PC-3 (cell line): ENCODE measurements at regions of chr9 and their contacts with region 1.

Region 1: DNA sequence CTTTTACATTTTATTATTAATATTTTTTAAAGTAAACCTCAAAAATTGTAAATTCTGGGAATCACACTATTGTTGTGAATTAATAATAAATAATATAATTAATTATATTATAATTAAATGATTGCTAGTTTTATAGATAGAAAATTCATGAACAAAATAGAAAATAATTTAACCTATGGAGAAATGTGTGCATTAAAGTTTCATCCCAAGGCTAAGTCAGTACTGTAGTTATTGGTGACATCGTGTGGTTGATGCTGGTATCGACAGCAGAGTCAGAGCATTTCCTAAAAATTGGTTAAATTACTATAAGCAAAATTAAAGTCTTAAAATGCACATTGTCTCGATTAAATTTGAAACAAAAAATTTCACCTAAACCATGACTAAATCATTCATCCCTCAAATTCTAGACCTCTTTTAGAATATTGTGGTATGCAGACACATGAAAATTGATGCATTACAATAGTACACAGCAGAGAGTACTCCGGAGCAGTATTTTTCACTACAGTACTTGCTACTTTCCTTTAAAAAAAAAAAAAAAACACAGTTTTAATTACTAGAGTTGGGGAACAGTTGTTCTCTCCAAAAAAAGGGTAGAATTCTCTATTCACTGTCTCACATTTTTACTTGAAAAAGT is 73.9 kb downstream of the RORB start:
- DNase-seq: peak; percentile 47
- ATAC-seq: no peak
- H3K4me3 ChIP-seq: no peak overlapping the region
- H3K27ac ChIP-seq: no peak overlapping the region
- H3K4me1 ChIP-seq: no peaks in the 10 kb centered on the region
- H3K27me3 ChIP-seq: no peaks in the 10 kb centered on the region; the same call in 1 of the 2 replicates
- CTCF ChIP-seq: peak; percentile 55

Region 2: DNA sequence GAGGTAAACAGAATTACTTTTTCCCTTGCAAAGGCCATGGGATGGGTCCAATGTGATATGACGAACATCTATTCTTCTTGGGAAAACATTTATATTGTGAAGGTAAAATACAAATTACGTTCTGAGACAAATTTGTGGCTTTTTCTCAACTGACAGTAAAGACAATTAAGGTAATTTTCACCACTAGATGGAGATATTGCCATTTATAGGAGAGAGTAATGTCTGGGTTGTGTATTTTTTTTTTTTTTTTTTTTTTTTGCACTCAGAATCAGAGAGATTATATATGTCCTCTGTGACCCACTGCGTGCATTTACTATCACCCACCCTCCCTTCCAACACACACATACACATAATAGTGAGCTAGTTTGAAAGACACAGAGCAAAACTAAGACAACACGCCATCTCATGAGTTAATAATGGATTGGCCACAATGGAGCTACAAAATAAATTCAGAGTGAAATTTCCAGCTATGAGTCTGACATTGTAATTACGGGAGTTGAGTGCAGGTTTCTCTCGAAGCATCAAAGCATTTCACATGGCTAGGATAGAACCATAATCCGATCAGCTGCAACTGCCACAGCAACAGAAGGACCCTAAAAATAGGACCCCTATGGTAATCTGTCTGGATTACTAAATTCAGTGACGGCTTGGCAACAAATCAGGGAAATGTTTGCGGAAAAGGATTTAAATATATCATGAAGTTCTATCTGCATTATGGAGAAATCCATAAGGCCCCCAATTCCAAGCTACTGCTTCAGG is 1370.1 kb before region 1 on chr9:
- CTCF ChIA-PET with region 1: no interaction called
- POLR2A ChIA-PET with region 1: no interaction called
- intact Hi-C with region 1: loop called (anchors 10 kb)
- DNase-seq: peak; percentile 68
- ATAC-seq: peak; percentile 54; the same call in 1 of the 2 replicates
- H3K4me3 ChIP-seq: no peak overlapping the region
- H3K27ac ChIP-seq: no peak overlapping the region
- H3K4me1 ChIP-seq: no peaks in the 10 kb centered on the region
- H3K27me3 ChIP-seq: no peaks in the 10 kb centered on the region
- CTCF ChIP-seq: peak; percentile 65

Region 3: DNA sequence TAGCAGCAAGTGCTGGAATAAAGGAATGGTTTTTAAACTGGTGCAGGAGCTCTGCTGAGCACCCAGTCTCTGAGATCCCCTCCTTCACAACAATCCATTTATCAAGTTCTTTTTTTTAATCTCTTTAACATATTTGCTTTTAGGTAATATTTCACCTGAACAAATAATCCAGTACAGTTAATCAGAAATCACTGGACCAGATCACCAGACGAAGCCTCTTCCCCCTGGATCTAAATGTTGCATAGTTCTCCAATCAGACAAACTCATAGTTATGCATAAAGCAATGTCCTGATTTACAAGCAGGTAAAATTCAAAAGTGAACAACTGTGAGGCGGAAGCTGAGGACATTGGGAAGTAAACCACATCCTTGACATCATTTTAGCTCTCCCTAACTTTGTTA is 731.5 kb before region 1 on chr9:
- CTCF ChIA-PET with region 1: no interaction called
- POLR2A ChIA-PET with region 1: no interaction called
- intact Hi-C with region 1: no loop called
- DNase-seq: no peak
- ATAC-seq: no peak
- H3K4me3 ChIP-seq: no peak overlapping the region
- H3K27ac ChIP-seq: no peak overlapping the region
- H3K4me1 ChIP-seq: no peaks in the 10 kb centered on the region
- H3K27me3 ChIP-seq: no peaks in the 10 kb centered on the region
- CTCF ChIP-seq: no peak